Activated B cell treated with CpG ODN at 0.5 μM for 24 hours (primary cell): ENCODE measurements at regions of chr3 and their contacts with region 1.

Region 1: DNA sequence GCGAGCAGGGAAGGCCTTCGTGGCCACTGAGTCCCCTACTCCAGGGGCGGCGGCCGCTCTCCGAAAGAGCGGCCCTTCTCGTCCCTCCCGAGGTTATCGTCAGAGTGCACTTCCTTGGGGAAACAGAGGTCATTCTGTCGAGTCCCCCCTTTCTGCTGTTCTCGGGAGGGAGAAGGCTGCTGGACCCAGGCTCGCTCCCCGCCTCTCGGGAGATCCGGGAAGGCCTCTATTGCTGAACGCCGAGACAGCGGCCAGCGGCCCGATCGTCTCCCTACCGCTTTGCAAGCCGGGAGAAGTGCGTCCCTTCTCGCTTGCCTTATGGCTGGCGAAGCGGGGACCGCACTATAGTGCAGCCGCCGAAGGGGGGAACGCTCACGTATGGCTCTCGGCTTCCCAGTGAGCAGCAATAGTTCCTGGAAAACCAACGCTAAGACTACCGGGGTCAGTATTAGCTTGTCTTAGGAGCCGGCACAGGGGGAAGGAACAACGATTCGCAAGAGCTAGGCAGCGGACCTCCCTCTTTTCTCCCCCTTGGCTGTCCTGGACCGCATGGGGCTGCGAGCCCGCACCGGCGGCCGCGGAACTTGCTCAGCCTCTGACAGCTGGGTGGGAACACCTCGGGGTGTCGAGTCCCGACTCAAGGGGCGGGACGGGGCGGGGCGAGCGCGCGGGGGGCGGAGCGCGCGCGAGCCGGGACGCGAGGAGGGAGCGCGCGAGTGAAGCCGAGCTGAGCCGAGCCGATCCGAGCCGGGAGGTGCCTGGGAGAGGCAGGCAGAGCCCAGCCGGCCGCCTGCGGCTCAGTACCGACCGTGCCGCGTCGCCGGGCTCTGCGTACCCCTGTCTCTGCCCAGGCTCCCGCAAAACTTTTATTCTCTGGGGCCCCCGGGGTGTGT is 930 bp upstream of the PPM1L start:
- DNase-seq: peak; percentile 79
- ATAC-seq: peak; percentile 85
- H3K4me3 Mint-ChIP-seq: peak overlapping the region; percentile 92
- H3K27ac Mint-ChIP-seq: peak overlapping the region; percentile 94
- H3K4me1 Mint-ChIP-seq: peaks cover 27% of the 10 kb centered on the region
- H3K27me3 Mint-ChIP-seq: peaks cover 12% of the 10 kb centered on the region
- CTCF ChIP-seq: no peak

Region 2: DNA sequence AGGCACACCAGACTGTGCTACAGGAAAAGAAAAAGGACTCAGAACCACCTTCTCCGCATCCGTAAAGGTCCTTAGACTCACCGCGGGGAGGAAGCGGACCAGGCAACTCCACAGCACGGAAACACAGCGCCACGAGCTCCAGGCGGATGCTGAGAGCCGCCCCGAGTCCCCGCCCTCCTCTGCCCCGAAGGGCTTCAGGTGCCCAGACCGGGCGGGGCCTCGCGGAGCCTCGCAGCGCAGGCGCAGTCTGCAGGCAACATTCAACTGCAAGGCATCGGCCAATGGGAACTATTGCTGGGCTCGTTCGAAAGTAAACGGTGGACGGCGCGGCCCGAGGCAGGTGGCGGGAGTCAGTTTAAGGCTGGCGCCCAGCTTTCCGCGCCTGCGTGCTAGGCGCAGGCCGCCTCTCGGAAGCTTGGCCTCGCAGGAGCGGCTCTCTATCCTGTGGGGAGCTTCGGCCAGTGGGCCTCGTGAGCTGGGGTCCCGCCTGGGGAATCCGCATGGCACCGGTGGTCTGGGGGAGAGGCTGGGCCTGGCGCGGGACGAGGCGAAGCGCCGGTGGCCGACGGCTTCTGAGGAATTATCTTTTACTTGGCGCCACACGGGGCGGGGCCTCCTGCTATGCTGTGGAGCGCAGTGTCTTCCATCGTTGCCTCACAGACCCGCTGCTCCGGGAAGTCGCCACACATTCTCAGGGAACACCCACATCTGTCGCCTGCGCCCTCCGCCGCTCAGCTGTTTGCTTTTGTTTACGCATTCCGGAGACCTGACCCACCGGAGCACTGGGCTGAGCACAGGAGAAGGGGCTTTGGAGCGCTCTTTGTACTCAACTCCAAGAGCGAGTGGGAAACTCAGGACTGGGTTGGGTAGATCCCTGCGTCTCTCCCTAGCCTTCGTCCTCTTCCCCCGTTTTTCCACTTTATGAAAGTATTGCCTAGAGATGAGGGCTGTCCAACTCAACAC is 305.2 kb before region 1 on chr3 and contains the start of gene TRIM59:
- CTCF ChIA-PET with region 1: no interaction called
- POLR2A ChIA-PET with region 1: interaction called, 6 read pairs
- intact Hi-C with region 1: loop called (anchors 1 kb)
- DNase-seq: peak; percentile 92
- ATAC-seq: peak; percentile 96
- H3K4me3 Mint-ChIP-seq: peak within 1 kb of the TSS; percentile 94
- H3K27ac Mint-ChIP-seq: peak within 1 kb of the TSS; percentile 90
- H3K4me1 Mint-ChIP-seq: peaks cover 33% of the 10 kb centered on the region
- H3K27me3 Mint-ChIP-seq: no peaks in the 10 kb centered on the region
- CTCF ChIP-seq: no peak
- total RNA-seq, gene TRIM59: 23.4 TPM in 2 replicates

Region 3: DNA sequence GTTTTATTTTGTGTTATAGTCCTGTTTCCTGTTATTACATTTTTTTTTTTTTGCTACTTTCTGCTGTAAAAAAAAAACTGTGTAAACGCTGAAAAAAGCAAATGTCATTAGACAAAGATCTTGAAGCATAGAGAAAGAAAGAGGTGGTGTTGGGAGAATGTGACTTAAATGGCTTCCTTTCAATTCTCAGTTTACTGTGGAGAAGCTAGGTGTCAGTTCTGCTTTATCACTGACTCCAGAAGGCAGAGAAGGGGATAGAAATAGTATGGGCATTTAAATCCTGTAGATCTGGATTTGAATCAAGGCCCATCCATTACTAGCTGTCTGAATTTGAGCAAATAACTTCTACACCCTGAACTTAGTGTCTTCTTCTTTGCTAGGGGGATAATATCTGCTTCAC is 23.9 kb after region 1 on chr3:
- CTCF ChIA-PET with region 1: no interaction called
- POLR2A ChIA-PET with region 1: no interaction called
- intact Hi-C with region 1: loop called (anchors 2 kb)
- DNase-seq: no peak
- ATAC-seq: no peak
- H3K4me3 Mint-ChIP-seq: no peak overlapping the region
- H3K27ac Mint-ChIP-seq: no peak overlapping the region
- H3K4me1 Mint-ChIP-seq: peaks cover 6% of the 10 kb centered on the region
- H3K27me3 Mint-ChIP-seq: no peaks in the 10 kb centered on the region
- CTCF ChIP-seq: no peak

Region 4: DNA sequence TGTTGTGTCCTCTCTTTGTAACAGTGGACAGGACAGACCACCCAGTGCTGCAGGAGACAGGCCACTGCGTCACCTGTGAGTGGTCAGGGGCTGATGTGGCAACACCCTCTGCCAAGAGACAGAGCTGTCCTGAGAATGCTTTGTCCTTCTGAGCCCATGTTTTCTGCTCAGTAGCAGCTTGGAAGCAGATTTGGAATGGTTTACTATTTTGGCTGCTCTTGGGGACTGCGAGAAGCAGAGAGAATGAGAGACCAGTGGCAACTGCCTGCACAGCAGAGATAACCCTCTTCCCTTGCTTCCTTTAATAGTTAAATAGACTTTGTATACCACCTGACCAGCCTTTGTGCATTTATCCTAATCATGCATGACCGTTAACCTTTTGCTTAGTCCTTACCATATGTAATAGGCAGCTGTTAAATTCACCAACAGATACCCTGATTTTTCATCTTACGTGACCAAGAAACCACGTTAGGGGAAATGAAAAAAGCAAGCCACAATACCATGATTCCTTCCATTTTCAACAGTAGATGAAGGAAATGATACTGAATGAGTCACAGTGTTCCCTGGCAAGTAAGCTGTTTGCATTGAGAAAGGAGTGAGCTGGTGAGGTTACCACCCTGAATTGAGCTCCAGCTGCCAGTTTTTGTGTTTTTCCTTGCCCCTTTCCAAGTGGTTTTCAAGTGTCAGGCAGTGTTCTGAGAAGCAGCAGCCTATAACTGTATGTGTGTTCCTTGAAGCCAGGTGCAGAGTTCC is 314.6 kb after region 1 on chr3:
- CTCF ChIA-PET with region 1: no interaction called
- POLR2A ChIA-PET with region 1: interaction called, 3 read pairs
- intact Hi-C with region 1: loop called (anchors 2 kb)
- DNase-seq: no peak
- ATAC-seq: peak; percentile 91
- H3K4me3 Mint-ChIP-seq: peak overlapping the region; percentile 51
- H3K27ac Mint-ChIP-seq: peak overlapping the region; percentile 82
- H3K4me1 Mint-ChIP-seq: peaks cover 48% of the 10 kb centered on the region
- H3K27me3 Mint-ChIP-seq: no peaks in the 10 kb centered on the region
- CTCF ChIP-seq: no peak

Region 5: DNA sequence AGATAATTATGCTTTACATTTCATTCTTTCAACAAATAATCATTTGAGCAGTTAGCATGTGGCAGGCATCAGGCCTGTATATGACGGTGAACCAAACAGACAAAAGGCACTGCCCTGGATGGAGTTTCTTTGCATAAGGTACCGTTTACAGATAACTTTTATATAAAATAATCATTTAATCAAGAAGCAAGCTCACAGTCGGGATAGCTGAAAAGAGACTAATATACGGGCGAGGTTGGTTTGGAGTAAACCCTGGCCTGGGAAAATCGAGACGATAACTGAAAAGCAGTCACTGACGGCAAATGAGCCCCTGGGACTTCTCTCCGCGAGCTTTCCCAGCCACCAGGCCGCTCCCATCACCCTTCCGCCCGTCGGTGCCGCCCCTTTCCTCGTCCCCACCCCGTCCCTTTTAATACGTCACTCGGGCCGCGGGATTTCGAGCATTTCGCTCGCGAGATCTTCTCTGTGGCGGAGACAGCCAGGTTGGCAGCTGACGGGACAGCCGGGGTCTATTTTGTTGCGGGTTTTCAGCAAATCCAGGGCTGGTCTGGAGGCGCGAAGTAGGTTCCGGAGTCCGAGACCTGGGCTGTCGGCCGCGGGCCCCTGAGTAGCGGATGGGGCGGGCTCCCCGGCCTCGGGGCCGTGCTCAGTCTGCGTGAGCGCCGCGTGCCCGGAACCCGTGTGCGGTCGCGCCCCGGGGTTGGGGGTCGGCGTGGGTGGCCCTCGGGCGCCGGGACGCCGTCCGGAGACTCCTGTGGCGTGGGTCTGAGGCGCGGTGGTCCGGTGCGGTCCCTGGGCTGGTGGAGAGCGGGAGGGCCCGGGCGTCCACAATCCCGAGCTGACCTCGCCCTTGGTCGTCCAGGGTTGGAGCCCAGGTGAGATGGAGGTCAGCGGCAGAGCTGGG is 466.0 kb after region 1 on chr3 and contains the start of gene NMD3:
- CTCF ChIA-PET with region 1: no interaction called
- POLR2A ChIA-PET with region 1: interaction called, 11 read pairs
- intact Hi-C with region 1: loop called (anchors 1 kb)
- DNase-seq: peak; percentile 87
- ATAC-seq: peak; percentile 95
- H3K4me3 Mint-ChIP-seq: peak within 1 kb of the TSS; percentile 91
- H3K27ac Mint-ChIP-seq: peak within 1 kb of the TSS; percentile 86
- H3K4me1 Mint-ChIP-seq: peaks cover 33% of the 10 kb centered on the region
- H3K27me3 Mint-ChIP-seq: peaks cover 6% of the 10 kb centered on the region
- CTCF ChIP-seq: no peak
- total RNA-seq, gene NMD3: 44.2 and 45.8 TPM in 2 replicates